Activated naive CD8-positive, alpha-beta T cell treated with anti-CD3 and anti-CD28 coated beads, Interleukin-2, amount 10 ng/mL, durations not matched to agents 7 days and 5 days (primary cell): ENCODE measurements at regions of chr17 and their contacts with region 1.

Region 1: DNA sequence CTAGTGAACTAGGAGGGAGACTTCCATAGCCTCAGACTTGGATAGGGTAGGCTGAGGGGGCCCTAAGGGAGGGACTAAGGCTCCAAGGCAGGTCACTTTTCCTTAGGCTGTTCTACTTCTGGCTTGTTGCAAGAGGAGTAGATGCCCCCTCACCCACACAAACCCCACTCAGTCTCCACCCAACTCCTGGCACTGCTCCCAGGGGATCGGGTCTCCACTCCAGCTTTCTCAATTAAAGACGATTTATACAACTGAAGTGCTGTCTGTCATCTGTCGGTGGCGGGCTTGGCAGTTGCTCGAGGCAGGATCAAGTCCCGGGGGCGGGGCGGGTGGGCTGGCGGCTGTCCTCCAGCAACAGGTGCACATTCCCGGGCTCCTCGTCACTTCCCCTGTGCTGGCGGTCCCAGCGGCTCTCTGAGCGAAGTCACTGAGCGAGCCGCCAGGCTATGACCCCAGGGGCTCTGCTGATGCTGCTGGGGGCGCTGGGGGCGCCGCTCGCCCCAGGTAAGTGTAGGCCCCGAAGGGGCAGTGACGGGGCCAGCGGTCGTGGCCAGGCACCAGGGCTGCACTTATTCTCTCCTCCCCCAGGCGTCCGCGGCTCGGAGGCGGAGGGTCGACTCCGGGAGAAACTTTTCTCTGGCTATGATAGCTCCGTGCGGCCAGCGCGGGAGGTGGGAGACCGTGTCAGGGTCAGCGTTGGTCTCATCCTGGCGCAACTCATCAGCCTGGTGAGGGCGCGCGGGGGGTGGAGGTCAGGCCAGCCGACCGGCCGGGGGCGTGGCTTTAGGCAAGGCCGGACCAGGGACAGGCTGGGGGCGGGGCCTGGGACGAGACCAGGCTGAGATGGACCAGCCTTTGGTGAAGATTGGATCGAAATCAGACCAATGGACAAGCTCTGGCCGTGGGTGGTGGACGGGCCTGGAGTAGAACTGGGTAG is at the start of gene CHRNB1:
- DNase-seq: peak; percentile 53
- ATAC-seq: peak; percentile 10
- H3K4me3 Mint-ChIP-seq: peak within 1 kb of the TSS; percentile 80
- H3K27ac Mint-ChIP-seq: peak within 1 kb of the TSS; percentile 10
- H3K4me1 Mint-ChIP-seq: peaks cover 29% of the 10 kb centered on the region
- H3K27me3 Mint-ChIP-seq: peaks cover 24% of the 10 kb centered on the region
- total RNA-seq, gene CHRNB1: 15.2 to 15.7 TPM

Region 2: DNA sequence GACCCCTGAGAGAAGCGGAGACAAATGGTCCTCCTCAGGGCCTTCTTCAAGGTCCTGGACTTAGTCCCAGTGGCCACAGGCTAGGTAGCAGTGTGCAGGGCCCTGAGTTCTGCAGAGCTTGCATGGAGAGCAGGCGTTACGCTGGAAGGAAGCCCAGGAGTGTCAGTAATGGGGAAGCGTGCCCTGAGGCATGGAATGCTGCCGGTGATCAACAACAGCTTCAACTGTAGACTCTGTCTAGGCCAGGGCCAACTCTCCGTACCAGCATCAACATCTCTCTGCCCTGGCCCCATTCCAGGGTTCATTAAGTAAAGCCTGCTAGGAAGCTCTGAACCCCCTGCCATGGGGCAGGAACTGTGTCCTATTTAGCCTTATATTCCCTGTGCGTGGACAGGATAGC is 64.6 kb before region 1 on chr17:
- POLR2A ChIA-PET with region 1: no interaction called
- DNase-seq: no peak
- ATAC-seq: no peak
- H3K4me3 Mint-ChIP-seq: no peak overlapping the region
- H3K27ac Mint-ChIP-seq: no peak overlapping the region
- H3K4me1 Mint-ChIP-seq: peaks cover 11% of the 10 kb centered on the region
- H3K27me3 Mint-ChIP-seq: peaks cover 37% of the 10 kb centered on the region

Region 3: DNA sequence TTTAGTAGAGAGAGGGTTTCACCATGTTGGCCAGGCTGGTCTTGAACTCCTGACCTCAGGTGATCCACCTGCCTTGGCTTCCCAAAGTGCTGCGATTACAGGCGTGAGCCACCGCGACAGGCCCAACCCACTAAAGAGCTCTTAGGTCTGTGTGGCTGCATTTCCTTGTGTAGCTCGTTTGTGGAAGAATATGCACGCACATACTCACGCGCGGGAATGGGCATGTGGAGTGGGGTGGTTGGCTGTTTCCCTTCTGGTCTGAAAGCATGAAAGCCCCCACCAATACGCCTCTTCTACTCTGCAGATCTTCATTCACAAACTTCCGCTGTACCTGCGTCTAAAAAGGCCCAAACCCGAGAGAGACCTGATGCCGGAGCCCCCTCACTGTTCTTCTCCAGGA is 10.0 kb after region 1 on chr17:
- POLR2A ChIA-PET with region 1: interaction called, 29 read pairs
- DNase-seq: no peak
- ATAC-seq: no peak
- H3K4me3 Mint-ChIP-seq: peak overlapping the region; percentile 90
- H3K27ac Mint-ChIP-seq: peak overlapping the region; percentile 94
- H3K4me1 Mint-ChIP-seq: peaks cover 30% of the 10 kb centered on the region
- H3K27me3 Mint-ChIP-seq: no peaks in the 10 kb centered on the region

Region 4: DNA sequence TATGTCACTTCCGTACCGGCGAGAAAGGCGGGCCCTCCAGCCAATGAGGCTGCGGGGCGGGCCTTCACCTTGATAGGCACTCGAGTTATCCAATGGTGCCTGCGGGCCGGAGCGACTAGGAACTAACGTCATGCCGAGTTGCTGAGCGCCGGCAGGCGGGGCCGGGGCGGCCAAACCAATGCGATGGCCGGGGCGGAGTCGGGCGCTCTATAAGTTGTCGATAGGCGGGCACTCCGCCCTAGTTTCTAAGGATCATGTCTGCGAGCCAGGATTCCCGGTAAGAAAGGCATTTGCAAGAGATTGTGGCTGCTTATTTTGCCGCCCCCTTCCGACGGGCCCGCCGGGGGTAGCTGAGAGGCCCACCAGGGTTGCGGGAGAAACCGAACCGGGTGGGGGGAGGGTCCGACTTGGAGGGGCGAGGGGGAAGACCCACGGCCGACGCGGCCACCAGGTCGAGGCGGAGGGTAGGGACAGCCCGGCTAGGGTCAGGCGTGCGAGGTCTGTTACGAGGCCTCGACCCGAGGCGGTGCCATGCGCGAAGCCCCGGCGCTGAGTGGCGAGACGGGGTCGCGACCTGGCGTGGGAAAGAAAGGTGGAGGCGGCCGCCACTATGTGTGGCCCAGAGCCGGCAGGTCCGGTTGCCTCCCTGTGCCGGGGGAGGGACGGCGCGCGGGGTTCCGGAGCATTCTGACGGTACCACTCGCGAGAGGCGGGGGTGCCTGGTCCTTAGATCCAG is 127.8 kb after region 1 on chr17:
- POLR2A ChIA-PET with region 1: interaction called, 10 read pairs
- DNase-seq: peak; percentile 100
- ATAC-seq: peak; percentile 1
- H3K4me3 Mint-ChIP-seq: peak overlapping the region; percentile 96
- H3K27ac Mint-ChIP-seq: peak overlapping the region; percentile 99
- H3K4me1 Mint-ChIP-seq: peaks cover 46% of the 10 kb centered on the region
- H3K27me3 Mint-ChIP-seq: no peaks in the 10 kb centered on the region